OCI-LY7 (cell line): ENCODE measurements at regions of chrX and their contacts with region 1.

Region 1: DNA sequence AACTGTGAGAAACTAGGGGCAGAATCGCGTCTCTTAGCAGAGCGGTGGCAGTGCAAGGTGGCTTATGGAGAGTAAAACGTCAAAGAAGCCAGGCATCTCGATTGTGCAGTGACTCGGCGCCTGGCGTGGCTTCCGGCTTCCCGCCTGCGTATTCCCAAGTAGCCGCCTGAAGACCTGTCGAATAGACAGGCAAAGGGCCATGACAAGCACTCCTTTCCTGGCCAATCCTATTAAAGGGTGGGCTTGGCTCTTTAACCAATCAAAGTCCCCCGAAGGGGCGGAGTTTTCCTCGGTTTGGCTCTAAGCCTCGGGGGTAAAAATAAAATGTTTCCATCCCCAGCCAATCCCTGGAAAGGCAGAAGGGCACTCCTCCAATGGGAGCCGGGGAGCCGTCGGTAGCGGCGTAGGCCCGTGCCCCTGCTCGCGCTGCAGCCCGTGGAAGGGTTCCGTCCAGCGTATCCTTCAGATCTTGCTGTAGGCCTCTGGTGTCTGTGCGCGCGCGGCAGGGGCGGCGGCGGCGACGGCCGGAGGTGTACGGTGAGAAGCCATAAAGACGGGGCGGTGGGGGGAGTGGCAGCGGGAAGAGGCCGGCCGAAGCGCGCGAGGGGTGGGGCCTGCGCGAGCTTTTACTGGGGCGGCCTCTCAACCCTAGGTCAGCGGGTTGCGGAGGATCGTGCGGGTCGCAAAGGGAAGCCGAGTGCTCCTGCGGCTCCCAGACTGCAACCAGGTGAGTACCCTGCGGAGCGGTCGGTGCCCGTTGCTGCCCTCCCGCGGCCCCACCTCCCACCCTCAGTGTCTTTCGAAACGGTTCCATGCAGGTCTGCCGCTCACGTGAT is at the start of gene KANTR:
- DNase-seq: peak; percentile 94
- H3K4me3 ChIP-seq: peak within 1 kb of the TSS; percentile 78
- H3K27ac ChIP-seq: peak within 1 kb of the TSS; percentile 81
- H3K4me1 ChIP-seq: peaks cover 18% of the 10 kb centered on the region
- CTCF ChIP-seq: peak; percentile 24; the same call in 1 of the 2 replicates
- total RNA-seq, gene KANTR: 23.2 and 28.3 TPM in 2 replicates

Region 2: DNA sequence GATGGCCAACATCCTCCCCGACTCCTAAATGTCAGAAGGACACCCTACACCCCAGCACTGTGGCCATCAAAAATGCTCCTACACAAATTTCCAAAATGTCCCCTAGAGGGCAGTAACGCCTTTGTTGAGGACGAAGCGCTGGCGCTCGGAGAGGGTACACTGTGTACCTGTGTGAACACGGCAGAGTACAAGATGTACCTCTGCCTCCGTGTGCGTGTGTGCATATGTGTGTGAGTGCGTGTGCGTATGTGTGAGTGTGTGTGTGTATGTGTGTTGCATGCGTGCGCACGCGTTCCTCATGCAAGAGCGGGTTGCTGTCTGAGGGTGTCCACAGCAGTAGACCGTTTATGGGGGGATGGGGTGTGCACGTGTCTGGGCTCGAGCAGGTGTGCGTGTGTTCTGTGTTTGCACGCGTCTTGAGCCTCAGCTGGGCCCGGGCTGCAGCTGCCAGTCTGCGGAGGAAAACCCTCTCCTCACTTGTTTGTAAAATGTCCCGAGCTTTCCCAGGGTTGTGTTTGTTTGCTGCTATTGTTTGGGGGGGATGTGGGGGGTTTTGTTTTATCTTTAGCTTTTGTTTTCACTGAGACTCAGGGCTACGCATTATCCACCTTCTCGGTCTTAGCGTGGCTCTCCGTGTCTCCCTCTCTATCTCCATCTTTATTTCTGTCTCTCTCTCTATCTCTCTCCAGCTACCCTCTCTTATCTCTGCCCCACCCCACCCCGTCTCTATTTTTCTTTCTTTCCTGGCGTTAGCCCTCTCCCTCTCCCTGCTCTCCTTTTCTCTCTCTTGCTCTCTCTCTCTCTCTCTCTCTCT is 22.2 kb before region 1 on chrX:
- CTCF ChIA-PET with region 1: no interaction called
- POLR2A ChIA-PET with region 1: interaction called, 9 read pairs
- intact Hi-C with region 1: loop called (anchors 1 kb)
- DNase-seq: peak; percentile 84
- H3K4me3 ChIP-seq: peak overlapping the region; percentile 53
- H3K27ac ChIP-seq: peak overlapping the region; percentile 86
- H3K4me1 ChIP-seq: peaks cover 18% of the 10 kb centered on the region
- CTCF ChIP-seq: peak; percentile 77

Region 3: GRCh38 chrX:53171356-53171755 is 77.4 kb after region 1 on chrX:
- CTCF ChIA-PET with region 1: no interaction called
- POLR2A ChIA-PET with region 1: no interaction called
- intact Hi-C with region 1: no loop called
- DNase-seq: no peak
- H3K4me3 ChIP-seq: no peak overlapping the region
- H3K27ac ChIP-seq: no peak overlapping the region
- H3K4me1 ChIP-seq: peaks cover 17% of the 10 kb centered on the region
- CTCF ChIP-seq: no peak

Region 4: DNA sequence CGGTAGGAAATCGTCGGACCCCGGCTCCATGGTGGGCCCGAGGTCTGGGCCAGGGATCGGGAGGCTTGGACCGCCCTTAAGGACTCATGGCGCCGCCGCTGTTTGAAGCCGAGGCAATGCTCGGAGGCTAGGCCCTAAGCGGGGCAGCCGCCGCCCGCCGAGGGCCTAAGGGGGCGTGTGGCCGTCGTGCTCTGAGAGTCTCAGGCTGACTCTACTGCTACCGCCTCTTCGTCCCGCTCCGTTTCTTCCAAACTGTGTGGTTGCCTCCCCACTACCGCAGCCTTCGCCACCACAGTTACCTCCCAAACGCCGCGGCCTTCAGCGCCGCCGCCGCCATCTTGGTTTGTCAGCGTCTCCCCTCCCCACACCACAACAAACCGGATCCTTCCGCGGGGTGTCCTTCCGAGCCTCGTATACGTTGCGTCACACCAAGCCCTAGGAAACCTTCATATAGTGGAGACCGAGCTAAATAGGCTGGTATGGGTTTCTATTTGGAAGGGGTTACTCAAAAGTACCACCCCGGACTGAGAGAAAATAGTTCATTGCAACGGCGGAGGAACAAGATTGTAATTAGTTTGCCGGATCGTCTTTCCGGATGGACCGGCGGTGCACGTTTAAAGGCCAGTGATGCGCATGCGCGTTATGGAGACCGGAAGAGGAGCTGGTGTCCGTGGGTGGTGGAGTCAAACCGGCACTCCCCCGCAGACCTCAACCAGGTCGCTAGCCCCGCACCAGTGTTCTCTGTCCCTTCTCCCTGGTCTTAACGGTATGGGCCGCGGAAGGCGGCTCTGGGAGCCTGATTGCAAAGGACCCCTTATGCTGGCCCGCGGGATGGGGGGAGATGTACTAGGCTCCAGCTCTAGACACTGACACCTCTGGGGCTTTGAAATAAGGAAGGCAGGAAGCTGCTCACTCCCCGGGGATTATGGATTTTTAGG is 131.2 kb after region 1 on chrX and contains the start of gene KDM5C:
- CTCF ChIA-PET with region 1: no interaction called
- POLR2A ChIA-PET with region 1: no interaction called
- intact Hi-C with region 1: loop called (anchors 10 kb)
- DNase-seq: peak; percentile 94
- H3K4me3 ChIP-seq: peak within 1 kb of the TSS; percentile 100
- H3K27ac ChIP-seq: peak within 1 kb of the TSS; percentile 65
- H3K4me1 ChIP-seq: peaks cover 45% of the 10 kb centered on the region
- CTCF ChIP-seq: no peak
- total RNA-seq, gene KDM5C: 54.8 and 58.9 TPM in 2 replicates